Ovary (tissue), 10 donors: ENCODE measurements at regions of chr16 and their contacts with region 1.

Region 1: GRCh38 chr16:85126705-85127419 is 14.6 kb upstream of the CIBAR2 start:
- DNase-seq: peak; percentile 54 to 77 (median 67)
- H3K4me3 ChIP-seq: no peak overlapping the region
- H3K27ac ChIP-seq: no peak overlapping the region
- H3K4me1 ChIP-seq: peaks cover 13% of the 10 kb centered on the region
- H3K27me3 ChIP-seq: no peaks in the 10 kb centered on the region
- CTCF ChIP-seq: no peak
- EP300 ChIP-seq: no peak
- POLR2A ChIP-seq: no peak

Region 2: DNA sequence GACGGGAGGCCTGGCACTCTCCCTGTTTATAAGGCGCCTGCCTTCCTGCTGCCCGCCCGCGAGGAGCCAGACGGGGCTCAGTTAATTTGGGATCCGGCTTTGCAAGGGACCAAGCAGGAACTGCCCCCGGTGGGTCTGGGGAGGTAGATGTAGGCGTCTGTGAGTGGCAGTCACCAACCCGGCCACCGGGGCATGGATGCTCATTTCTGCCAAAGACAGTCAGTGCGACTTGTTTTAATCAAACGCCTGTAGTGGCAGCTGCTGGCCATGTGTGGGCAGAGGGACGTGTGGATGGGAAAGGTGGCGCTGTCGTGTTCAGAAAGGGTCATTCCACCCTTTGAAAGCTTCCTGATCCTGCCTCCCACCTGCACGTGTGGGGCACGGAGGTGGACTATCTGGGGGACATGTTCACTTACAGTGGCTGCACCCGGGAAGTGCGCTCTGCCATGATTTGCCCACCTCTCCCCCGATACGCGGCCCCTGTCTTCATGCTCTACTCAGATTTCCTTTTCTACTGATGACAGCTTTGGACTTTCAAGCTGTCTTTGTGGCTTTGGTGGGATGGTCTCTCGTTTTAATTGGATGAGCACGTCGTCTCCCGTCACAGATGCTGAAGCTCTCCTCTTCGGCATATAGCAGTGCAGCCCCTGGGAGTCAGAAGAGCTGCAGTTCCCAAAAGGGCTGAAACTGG is 45.7 kb after region 1 on chr16:
- intact Hi-C with region 1: loop called in 2 of 4 experiments (anchors 5 to 10 kb)
- DNase-seq: peak in 1 of 5 donors; percentile 50
- H3K4me3 ChIP-seq: peak overlapping the region; percentile 6
- H3K27ac ChIP-seq: peak overlapping the region in 1 of 2 donors; percentile 18
- H3K4me1 ChIP-seq: peaks cover 36% of the 10 kb centered on the region
- H3K27me3 ChIP-seq: no peaks in the 10 kb centered on the region
- CTCF ChIP-seq: no peak
- EP300 ChIP-seq: no peak
- POLR2A ChIP-seq: no peak

Region 3: GRCh38 chr16:85227946-85228862 is 101.3 kb after region 1 on chr16:
- intact Hi-C with region 1: loop called in 2 of 4 experiments (anchors 1 to 10 kb)
- DNase-seq: peak in 2 of 5 donors; percentile 39 to 53
- H3K4me3 ChIP-seq: no peak overlapping the region
- H3K27ac ChIP-seq: peak overlapping the region in 1 of 2 donors; percentile 11
- H3K4me1 ChIP-seq: peaks cover 44% of the 10 kb centered on the region
- H3K27me3 ChIP-seq: no peaks in the 10 kb centered on the region
- CTCF ChIP-seq: no peak
- EP300 ChIP-seq: no peak
- POLR2A ChIP-seq: no peak